Common myeloid progenitor, CD34-positive (primary cell): ENCODE measurements at regions of chr17 and their contacts with region 1.

Region 1: DNA sequence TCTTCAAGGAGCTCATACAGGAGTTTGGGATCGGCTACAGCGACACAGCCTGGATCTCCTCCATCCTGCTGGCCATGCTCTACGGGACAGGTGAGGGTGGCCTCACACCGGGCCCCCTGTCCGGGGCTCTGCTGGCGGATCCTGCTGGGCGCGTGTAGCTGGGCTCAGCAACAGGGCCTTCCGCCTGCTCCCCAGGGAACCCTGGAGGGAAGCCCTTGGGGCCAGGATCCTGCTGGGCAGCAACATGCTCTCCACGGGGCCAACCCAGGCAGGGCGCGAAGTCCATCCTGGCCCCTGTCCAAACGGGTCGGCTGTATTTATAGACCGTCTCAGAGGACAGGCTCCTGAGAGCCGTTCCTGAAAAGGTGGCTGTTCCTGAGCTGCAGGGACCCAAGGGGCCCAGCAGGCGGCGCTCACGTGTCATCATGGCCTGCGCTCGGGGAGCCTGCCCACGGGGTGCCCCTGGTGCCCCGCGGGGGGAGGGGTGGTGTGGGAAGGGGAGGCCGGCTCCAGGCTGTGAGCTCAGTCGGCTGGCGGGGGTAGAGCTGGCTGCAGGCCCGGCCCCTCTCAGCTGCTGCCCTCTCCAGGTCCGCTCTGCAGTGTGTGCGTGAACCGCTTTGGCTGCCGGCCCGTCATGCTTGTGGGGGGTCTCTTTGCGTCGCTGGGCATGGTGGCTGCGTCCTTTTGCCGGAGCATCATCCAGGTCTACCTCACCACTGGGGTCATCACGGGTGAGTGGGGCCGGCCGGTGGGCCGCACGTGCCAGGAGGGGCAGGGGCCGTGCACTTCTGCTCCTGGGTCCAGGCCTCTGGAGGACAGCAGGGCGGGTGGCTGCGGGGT is 7.5 kb downstream of the SLC16A3 start:
- DNase-seq: peak; percentile 58 to 71 (median 67)
- H3K4me3 ChIP-seq: no peak overlapping the region
- H3K27ac ChIP-seq: peak overlapping the region in 1 of 2 experiments; percentile 54
- H3K4me1 ChIP-seq: peaks cover 0 to 90% (median 65%) of the 10 kb centered on the region in 4 experiments
- H3K27me3 ChIP-seq: no peaks in the 10 kb centered on the region

Region 2: DNA sequence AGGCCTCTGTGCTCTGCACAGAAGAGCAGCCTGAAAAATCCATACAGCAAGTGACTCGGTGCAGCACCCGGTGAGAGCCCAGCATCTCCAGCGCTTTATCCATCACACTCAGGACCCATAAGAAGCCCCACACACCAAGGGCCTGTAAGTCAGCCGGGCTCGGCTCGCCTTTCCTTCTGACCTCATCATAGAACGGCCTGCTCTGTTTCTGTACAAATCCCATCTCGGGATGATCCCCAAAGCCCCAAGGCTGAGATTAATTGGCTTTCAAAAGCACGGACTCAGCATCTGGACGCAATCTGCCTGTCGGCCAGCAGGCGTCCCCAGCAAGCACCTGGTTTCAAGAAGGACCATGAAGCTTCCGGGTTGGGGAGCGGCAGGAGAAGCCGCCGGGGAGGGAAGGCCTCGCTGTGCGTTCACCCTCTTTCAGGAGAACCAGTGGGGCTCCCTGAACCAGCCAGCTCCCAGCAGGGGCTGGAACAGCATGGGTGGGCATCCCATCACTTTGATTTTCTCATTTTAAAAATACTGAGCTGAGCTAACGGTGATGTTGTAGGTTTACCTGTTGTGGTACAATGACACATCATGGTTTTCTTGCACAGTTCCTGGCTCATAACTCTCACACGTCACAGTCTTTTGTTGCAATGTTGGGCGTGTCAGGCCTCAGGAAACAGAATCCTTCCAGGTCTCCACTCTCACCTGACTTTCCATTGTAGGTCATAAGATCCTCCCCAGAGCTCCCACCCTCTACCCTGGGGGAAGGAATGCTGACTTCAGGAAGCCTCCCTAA is 30.4 kb before region 1 on chr17:
- CTCF ChIA-PET with region 1: interaction called, 13 read pairs
- POLR2A ChIA-PET with region 1: interaction called, 5 read pairs
- DNase-seq: peak; percentile 83 to 88 (median 87)
- H3K4me3 ChIP-seq: peak overlapping the region in 3 of 7 experiments; percentile 35 to 54 (median 42)
- H3K27ac ChIP-seq: peak overlapping the region in 1 of 2 experiments; percentile 63
- H3K4me1 ChIP-seq: peaks cover 2 to 28% (median 17%) of the 10 kb centered on the region in 4 experiments
- H3K27me3 ChIP-seq: no peaks in the 10 kb centered on the region

Region 3: DNA sequence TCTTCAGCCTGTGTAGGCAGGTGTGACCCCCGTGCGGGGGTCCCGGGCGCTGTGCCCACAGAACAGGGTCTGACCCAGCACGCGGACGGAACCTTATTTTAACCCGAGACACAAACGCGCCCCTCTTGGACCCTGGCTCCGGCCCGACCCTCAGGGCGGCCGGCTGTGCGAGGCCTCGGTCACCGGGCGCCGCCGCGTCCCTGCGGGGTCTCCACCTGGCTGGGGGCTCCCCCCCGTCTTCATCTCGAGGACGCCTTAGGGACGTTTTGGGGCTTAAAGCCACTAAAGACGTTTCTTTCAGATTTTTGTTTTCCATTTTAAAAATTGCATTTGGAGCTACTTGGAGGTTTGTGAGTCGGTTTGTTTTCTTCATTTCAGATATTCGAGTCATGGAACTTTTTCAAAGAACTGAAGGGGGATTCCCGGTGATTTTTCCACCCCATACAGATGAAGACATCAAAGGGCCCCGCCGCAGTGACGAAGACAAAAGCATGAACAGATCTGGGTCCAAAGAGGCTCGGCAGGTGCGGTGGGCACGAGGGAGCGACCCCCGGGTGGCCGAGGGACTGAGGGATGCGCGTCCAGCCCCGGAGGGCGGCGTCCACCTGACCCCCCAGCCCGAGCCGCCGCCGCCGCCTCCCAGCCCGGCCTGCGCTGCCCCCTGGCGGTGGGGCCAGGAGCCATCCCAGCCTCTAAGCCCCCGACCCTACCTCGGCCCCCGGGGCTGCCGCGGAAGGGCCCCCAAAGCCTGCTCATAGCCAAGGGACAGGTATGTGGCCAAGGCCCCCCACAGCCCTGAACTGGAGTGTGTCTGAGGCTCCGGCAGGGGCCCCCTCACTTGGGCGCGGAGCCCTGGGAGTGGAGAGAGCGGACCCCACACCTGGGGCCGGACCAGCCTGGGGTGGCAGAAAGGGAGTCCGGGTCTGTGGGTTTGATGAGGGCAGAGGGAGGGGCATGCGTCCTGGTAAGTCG is 84.9 kb after region 1 on chr17:
- CTCF ChIA-PET with region 1: interaction called, 12 read pairs
- POLR2A ChIA-PET with region 1: no interaction called
- DNase-seq: peak in 2 of 3 donors; percentile 69 to 70
- H3K4me3 ChIP-seq: peak overlapping the region in 1 of 7 experiments; percentile 52
- H3K27ac ChIP-seq: no peak overlapping the region
- H3K4me1 ChIP-seq: peaks cover 0 to 27% (median 16%) of the 10 kb centered on the region in 4 experiments
- H3K27me3 ChIP-seq: no peaks in the 10 kb centered on the region